ENCODE measurements at regions of chr9 and their contacts with region 1.

Region 1: GRCh38 chr9:76658535-76659231 is 105.6 kb upstream of the PCA3 start:
- DNase-seq: no peak
- ATAC-seq: peak; percentile 93

Region 2: GRCh38 chr9:76592091-76593010 is 66.3 kb before region 1 on chr9:
- intact Hi-C with region 1: loop called in 1 of 2 experiments (anchors 10 kb)
- DNase-seq: no peak
- ATAC-seq: no peak

Region 3: GRCh38 chr9:76684213-76684612 is 25.5 kb after region 1 on chr9:
- intact Hi-C with region 1: loop called in 1 of 2 experiments (anchors 2 kb)
- DNase-seq: no peak
- ATAC-seq: no peak

Region 4: DNA sequence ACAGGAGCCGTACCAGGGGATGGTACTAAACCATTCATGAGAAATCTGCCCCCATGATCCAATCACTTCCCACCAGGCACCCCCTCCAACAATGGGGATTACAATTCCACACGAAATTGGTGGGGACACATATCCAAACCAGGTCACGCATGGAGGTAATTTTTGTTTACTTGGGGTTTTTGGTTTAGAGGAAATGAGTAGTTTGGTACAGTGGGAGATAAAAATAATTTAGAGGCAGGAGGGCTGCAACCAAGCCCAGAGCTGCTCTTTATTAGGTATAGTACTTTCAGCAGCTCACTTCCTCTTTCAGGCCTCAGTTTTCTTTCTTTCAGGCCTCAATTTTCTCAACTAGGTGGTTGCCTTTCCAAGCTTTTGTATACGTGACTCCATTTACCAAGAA is 224.0 kb after region 1 on chr9:
- intact Hi-C with region 1: no loop called
- DNase-seq: no peak
- ATAC-seq: no peak